Activated CD4-positive, alpha-beta T cell treated with anti-CD3 and anti-CD28 coated beads for 36 hours (primary cell): ENCODE measurements at regions of chr11 and their contacts with region 1.

Region 1: DNA sequence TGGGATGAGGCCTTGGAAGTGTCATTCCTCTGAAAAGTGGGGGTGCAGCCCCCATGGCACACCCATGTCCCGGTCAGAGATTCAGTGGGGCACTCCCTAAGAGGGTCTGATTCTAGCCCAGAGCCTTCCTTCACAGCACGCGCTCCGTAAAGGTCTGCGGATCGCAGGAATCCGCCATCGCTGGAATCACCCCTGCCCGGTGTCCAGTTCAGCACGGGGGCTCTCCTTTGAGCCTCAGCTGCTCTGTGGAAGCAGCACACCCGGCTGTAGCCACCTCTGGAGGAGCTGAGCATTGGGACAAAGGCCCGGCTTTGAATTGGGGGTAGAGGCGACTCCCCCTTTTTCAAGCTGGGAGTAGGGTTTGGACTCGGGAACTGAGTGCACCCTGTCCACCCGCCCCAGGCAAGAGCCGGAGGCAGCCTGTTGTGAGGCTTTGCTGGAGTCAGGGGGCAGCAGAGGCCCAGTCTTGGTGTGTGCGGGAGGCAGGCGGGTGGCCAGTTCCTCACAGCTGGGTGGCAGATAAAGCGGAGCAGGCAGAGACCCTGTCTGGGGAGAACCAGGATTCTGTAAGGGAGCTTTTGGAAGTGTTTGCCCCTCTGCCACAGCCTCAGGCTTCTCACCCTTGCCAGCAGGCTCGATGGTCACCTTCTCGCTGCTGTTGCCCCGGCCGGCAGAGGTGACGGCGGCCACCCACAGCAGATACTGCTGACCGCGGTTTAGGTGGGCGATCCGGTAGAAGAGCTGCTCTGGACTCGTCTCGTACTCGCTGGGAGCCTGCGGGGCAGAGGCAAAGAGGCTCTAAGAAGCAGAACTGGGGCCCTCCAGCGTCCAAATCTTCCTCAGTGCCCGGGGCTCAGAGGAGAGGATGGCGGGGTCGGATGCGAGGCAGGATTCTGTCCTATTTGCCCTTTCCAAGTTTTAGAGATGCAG is 115.9 kb downstream of the CEP164 start:
- DNase-seq: peak; percentile 59
- ATAC-seq: peak; percentile 53
- H3K4me3 Mint-ChIP-seq: no peak overlapping the region
- H3K27ac Mint-ChIP-seq: no peak overlapping the region
- H3K4me1 Mint-ChIP-seq: no peaks in the 10 kb centered on the region
- H3K27me3 Mint-ChIP-seq: peaks cover 24% of the 10 kb centered on the region

Region 2: DNA sequence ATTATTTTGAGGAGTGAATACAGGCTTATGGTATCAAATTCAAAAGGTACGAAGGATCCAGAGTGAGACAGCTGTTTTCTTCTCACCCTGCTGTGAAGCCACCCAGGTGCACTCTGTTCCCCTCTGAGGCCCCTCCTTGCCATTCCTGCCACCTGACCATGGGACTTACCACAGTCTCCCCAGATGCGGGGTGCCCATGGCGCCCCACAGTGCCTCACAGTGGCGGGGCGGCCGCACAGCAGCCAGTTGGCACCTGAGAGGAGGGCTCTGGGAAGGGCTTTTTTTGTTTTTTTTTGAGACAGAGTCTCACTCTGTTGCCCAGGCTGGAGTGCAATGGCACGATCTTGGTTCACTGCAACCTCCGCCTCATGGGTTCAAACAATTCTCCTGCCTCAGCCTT is 35.8 kb after region 1 on chr11:
- CTCF ChIA-PET with region 1: interaction called, 3 read pairs
- POLR2A ChIA-PET with region 1: no interaction called
- intact Hi-C with region 1: loop called in 1 of 2 experiments (anchors 1 kb)
- DNase-seq: peak; percentile 48
- ATAC-seq: peak; percentile 75
- H3K4me3 Mint-ChIP-seq: no peak overlapping the region
- H3K27ac Mint-ChIP-seq: no peak overlapping the region
- H3K4me1 Mint-ChIP-seq: no peaks in the 10 kb centered on the region
- H3K27me3 Mint-ChIP-seq: no peaks in the 10 kb centered on the region